A673 (cell line): ENCODE measurements at regions of chr9 and their contacts with region 1.

Region 1: DNA sequence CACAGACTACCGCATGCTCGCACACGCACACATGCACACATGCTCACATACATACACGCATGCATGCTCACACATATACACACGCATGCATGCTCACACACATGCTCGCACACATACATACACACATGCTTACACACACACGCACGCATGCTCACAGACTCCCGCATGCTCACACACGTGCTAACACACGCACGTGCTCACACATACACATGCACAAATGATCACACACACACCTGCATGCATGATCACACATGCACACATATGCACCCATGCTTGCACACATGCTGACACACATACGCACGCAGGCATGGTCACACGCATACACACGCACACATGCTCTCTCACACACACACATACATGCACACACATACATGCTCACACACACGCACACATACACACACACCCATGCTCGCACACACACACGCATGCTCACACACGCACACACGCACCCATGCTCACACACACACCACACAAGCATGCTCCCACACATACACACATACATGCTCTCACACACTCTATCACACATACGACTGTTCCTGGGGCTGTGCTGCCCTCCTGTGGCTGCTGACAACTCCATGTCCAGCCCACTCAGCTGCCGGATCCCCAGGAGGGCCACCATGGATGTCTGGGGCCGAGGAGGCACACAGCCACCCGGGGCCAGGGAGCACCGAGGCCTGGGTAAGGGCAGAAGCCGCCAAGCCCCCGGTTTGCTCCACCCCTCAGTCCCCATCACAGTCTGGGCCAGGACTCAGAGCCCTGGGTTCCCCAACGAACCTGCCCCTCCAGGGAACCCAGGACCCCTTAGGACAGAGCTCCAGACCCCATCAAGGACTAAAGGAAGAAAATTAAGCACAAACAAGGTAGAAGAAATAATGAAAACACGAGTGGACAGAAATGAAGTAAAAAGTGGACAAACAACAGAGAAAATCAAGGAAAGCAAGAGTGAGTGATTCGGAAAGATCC is 31.4 kb upstream of the EGFL7 start:
- DNase-seq: peak; percentile 89
- H3K4me3 ChIP-seq: no peak overlapping the region
- H3K27ac ChIP-seq: no peak overlapping the region
- H3K4me1 ChIP-seq: no peaks in the 10 kb centered on the region
- H3K27me3 ChIP-seq: no peaks in the 10 kb centered on the region
- CTCF ChIP-seq: peak; percentile 95

Region 2: GRCh38 chr9:136482793-136483588 is 148.3 kb before region 1 on chr9 and contains the start of gene SEC16A:
- CTCF ChIA-PET with region 1: interaction called, 23 read pairs
- POLR2A ChIA-PET with region 1: no interaction called
- intact Hi-C with region 1: loop called (anchors 1 kb)
- DNase-seq: peak; percentile 97
- H3K4me3 ChIP-seq: peak within 1 kb of the TSS; percentile 86
- H3K27ac ChIP-seq: peak within 1 kb of the TSS; percentile 100
- H3K4me1 ChIP-seq: peaks cover 17% of the 10 kb centered on the region
- H3K27me3 ChIP-seq: no peaks in the 10 kb centered on the region
- CTCF ChIP-seq: no peak
- total RNA-seq, gene SEC16A: 72.9 and 73.7 TPM in 2 replicates

Region 3: GRCh38 chr9:136488247-136489214 is 142.8 kb before region 1 on chr9:
- CTCF ChIA-PET with region 1: interaction called, 23 read pairs
- POLR2A ChIA-PET with region 1: no interaction called
- intact Hi-C with region 1: loop called (anchors 1 kb)
- DNase-seq: peak; percentile 25
- H3K4me3 ChIP-seq: no peak overlapping the region
- H3K27ac ChIP-seq: no peak overlapping the region
- H3K4me1 ChIP-seq: peaks cover 9% of the 10 kb centered on the region
- H3K27me3 ChIP-seq: no peaks in the 10 kb centered on the region
- CTCF ChIP-seq: peak; percentile 97

Region 4: GRCh38 chr9:136545966-136546698 is 85.2 kb before region 1 on chr9 and contains the start of gene NOTCH1:
- CTCF ChIA-PET with region 1: no interaction called
- POLR2A ChIA-PET with region 1: no interaction called
- intact Hi-C with region 1: loop called (anchors 10 kb)
- DNase-seq: peak; percentile 97
- H3K4me3 ChIP-seq: peak within 1 kb of the TSS; percentile 86
- H3K27ac ChIP-seq: peak within 1 kb of the TSS; percentile 93
- H3K4me1 ChIP-seq: peaks cover 38% of the 10 kb centered on the region
- H3K27me3 ChIP-seq: no peaks in the 10 kb centered on the region
- CTCF ChIP-seq: no peak
- total RNA-seq, gene NOTCH1: 37.2 and 50.2 TPM in 2 replicates

Region 5: GRCh38 chr9:136671646-136672430 is 40.5 kb after region 1 on chr9:
- CTCF ChIA-PET with region 1: interaction called, 12 read pairs
- POLR2A ChIA-PET with region 1: no interaction called
- intact Hi-C with region 1: no loop called
- DNase-seq: peak; percentile 64
- H3K4me3 ChIP-seq: no peak overlapping the region
- H3K27ac ChIP-seq: no peak overlapping the region
- H3K4me1 ChIP-seq: peaks cover 25% of the 10 kb centered on the region
- H3K27me3 ChIP-seq: no peaks in the 10 kb centered on the region
- CTCF ChIP-seq: peak; percentile 95